Heart right ventricle (tissue), 16 donors: ENCODE measurements at regions of chr1 and their contacts with region 1.

Region 1: GRCh38 chr1:63537940-63538339 is 14.6 kb downstream of the EFCAB7 start:
- DNase-seq: no peak
- ATAC-seq: no peak
- H3K4me3 ChIP-seq: no peak overlapping the region
- H3K27ac ChIP-seq: no peak overlapping the region
- H3K4me1 ChIP-seq: no peaks in the 10 kb centered on the region
- H3K27me3 ChIP-seq: no peaks in the 10 kb centered on the region
- CTCF ChIP-seq: peak in 8 of 9 donors; percentile 4 to 62 (median 46)

Region 2: GRCh38 chr1:62832276-62832675 is 705.7 kb before region 1 on chr1:
- intact Hi-C with region 1: loop called in 1 of 10 experiments (anchors 10 kb)
- DNase-seq: no peak
- ATAC-seq: no peak
- H3K4me3 ChIP-seq: no peak overlapping the region
- H3K27ac ChIP-seq: no peak overlapping the region
- H3K4me1 ChIP-seq: peaks cover 0 to 3% (median 0%) of the 10 kb centered on the region in 9 donors
- H3K27me3 ChIP-seq: no peaks in the 10 kb centered on the region
- CTCF ChIP-seq: no peak

Region 3: GRCh38 chr1:63463248-63463647 is 74.7 kb before region 1 on chr1:
- intact Hi-C with region 1: loop called in 1 of 10 experiments (anchors 10 kb)
- DNase-seq: no peak
- ATAC-seq: no peak
- H3K4me3 ChIP-seq: no peak overlapping the region
- H3K27ac ChIP-seq: peak overlapping the region in 1 of 10 donors; percentile 26
- H3K4me1 ChIP-seq: peaks cover 0 to 7% (median 0%) of the 10 kb centered on the region in 9 donors
- H3K27me3 ChIP-seq: no peaks in the 10 kb centered on the region
- CTCF ChIP-seq: no peak